ENCODE measurements at regions of chr11 and their contacts with region 1.

Region 1: GRCh38 chr11:78907636-78908035 is 333.0 kb upstream of the NARS2 start:
- DNase-seq: peak; percentile 8
- H3K4me3 Mint-ChIP-seq: no peak overlapping the region
- H3K27ac Mint-ChIP-seq: no peak overlapping the region
- H3K4me1 Mint-ChIP-seq: peaks cover 10% of the 10 kb centered on the region
- H3K27me3 Mint-ChIP-seq: no peaks in the 10 kb centered on the region
- CTCF ChIP-seq: no peak

Region 2: GRCh38 chr11:78825591-78826020 is 82.0 kb before region 1 on chr11:
- CTCF ChIA-PET with region 1: no interaction called
- intact Hi-C with region 1: no loop called
- DNase-seq: no peak
- H3K4me3 Mint-ChIP-seq: no peak overlapping the region
- H3K27ac Mint-ChIP-seq: no peak overlapping the region
- H3K4me1 Mint-ChIP-seq: no peaks in the 10 kb centered on the region
- H3K27me3 Mint-ChIP-seq: peaks cover 39% of the 10 kb centered on the region
- CTCF ChIP-seq: no peak

Region 3: DNA sequence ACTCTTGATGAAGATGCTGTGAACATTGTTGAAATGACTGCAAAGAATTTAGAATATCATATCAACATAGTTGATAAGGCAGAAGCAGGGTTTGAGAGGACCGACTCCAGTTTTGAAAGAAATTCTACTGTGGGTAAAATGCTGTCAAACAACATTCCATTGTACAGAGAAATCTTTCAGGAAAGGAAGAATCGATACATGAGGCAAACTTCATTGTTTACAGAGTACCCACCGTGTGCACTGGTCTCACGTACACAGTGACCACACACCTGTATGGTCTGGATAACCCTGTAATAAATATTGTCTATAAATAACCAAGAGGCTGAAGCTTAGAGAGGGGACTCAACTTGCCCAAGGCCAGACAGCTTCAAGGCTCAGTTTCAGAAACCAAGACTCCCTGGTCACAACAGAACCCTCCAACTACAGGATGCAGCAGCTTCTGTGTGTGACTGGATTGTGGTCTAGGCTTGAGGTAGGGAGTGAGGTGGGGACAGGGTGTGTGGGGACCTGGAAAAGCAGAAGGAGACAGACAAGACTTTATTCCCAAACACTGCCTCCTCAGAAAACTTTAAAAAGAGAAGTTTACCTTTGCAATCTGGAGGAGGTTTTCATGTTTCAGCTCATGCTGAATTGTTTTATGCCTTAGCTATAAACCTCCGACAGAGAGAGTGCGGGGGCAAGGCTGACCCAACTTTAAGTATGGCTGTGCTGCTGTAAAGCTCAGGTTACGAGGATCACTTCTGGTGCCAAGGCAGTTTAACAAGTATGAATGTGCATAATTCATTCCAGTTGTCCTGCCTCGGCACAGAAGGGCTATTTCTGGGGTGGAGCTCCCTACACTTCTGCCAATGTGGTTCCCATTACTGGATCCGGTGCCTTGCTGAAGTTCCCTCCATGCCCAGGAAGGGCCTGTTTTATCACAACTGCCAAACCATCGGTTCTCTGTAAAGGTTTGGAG is 39.6 kb after region 1 on chr11:
- CTCF ChIA-PET with region 1: interaction called, 3 read pairs
- intact Hi-C with region 1: loop called (anchors 5 kb)
- DNase-seq: peak; percentile 45
- H3K4me3 Mint-ChIP-seq: no peak overlapping the region
- H3K27ac Mint-ChIP-seq: peak overlapping the region; percentile 64
- H3K4me1 Mint-ChIP-seq: peaks cover 22% of the 10 kb centered on the region
- H3K27me3 Mint-ChIP-seq: no peaks in the 10 kb centered on the region
- CTCF ChIP-seq: no peak

Region 4: DNA sequence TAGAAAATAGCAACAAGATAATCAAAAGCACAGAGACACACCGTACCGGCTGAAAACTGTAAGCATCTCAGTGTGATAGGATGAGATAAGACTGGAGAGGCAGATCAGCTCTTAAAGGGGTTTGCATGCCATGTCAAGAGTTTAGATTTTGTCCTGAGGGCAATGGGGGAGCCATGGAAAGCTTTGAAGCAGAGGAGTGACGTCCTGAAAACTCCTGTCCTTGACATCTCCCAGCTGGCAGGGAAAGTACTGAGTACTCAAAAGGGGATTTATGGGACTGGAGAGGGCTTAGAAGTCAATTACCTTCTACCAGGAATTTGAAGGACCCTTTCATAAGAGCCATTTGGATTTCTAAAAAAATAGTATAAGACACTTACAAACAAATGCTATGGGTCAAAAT is 87.5 kb after region 1 on chr11:
- CTCF ChIA-PET with region 1: no interaction called
- intact Hi-C with region 1: no loop called
- DNase-seq: no peak
- H3K4me3 Mint-ChIP-seq: no peak overlapping the region
- H3K27ac Mint-ChIP-seq: no peak overlapping the region
- H3K4me1 Mint-ChIP-seq: no peaks in the 10 kb centered on the region
- H3K27me3 Mint-ChIP-seq: peaks cover 42% of the 10 kb centered on the region
- CTCF ChIP-seq: no peak

Region 5: GRCh38 chr11:79062814-79063762 is 155.5 kb after region 1 on chr11:
- CTCF ChIA-PET with region 1: no interaction called
- intact Hi-C with region 1: no loop called
- DNase-seq: peak; percentile 25
- H3K4me3 Mint-ChIP-seq: no peak overlapping the region
- H3K27ac Mint-ChIP-seq: no peak overlapping the region
- H3K4me1 Mint-ChIP-seq: no peaks in the 10 kb centered on the region
- H3K27me3 Mint-ChIP-seq: peaks cover 55% of the 10 kb centered on the region
- CTCF ChIP-seq: no peak